ENCODE measurements at regions of chr10 and their contacts with region 1.

Region 1: GRCh38 chr10:17742918-17743317 is 9.1 kb upstream of the TMEM236 start:
- DNase-seq: no peak
- H3K4me3 ChIP-seq: no peak overlapping the region
- H3K27ac ChIP-seq: peak overlapping the region in 1 of 8 donors; percentile 76
- H3K4me1 ChIP-seq: peaks cover 5 to 31% (median 21%) of the 10 kb centered on the region in 6 donors
- H3K27me3 ChIP-seq: no peaks in the 10 kb centered on the region
- CTCF ChIP-seq: peak; percentile 66 to 90 (median 81)
- POLR2A ChIP-seq: no peak

Region 2: GRCh38 chr10:17792991-17793390 is 50.1 kb after region 1 on chr10:
- intact Hi-C with region 1: no loop called
- DNase-seq: no peak
- H3K4me3 ChIP-seq: no peak overlapping the region
- H3K27ac ChIP-seq: peak overlapping the region in 3 of 8 donors; percentile 21 to 26 (median 21)
- H3K4me1 ChIP-seq: peaks cover 0 to 7% (median 0%) of the 10 kb centered on the region in 6 donors
- H3K27me3 ChIP-seq: no peaks in the 10 kb centered on the region
- CTCF ChIP-seq: no peak
- POLR2A ChIP-seq: no peak

Region 3: GRCh38 chr10:17836942-17837341 is 94.0 kb after region 1 on chr10:
- intact Hi-C with region 1: loop called (anchors 10 kb)
- DNase-seq: no peak
- H3K4me3 ChIP-seq: peak overlapping the region in 2 of 8 donors; percentile 4 to 5
- H3K27ac ChIP-seq: peak overlapping the region in 7 of 8 donors; percentile 45 to 74 (median 69)
- H3K4me1 ChIP-seq: peaks cover 7 to 39% (median 31%) of the 10 kb centered on the region in 6 donors
- H3K27me3 ChIP-seq: peaks cover 0 to 4% (median 0%) of the 10 kb centered on the region in 7 donors
- CTCF ChIP-seq: no peak
- POLR2A ChIP-seq: no peak